ENCODE measurements at regions of chr1 and their contacts with region 1.

Region 1: GRCh38 chr1:160046494-160047110 is 14.8 kb upstream of the PIGM start:
- DNase-seq: peak in 7 of 9 experiments; percentile 11 to 66 (median 36)
- ATAC-seq: peak; percentile 80
- H3K4me3 ChIP-seq: peak overlapping the region in 1 of 2 experiments; percentile 24
- H3K4me3 Mint-ChIP-seq: peak overlapping the region; percentile 76
- H3K27ac ChIP-seq: no peak overlapping the region
- H3K27ac Mint-ChIP-seq: no peak overlapping the region
- H3K4me1 ChIP-seq: peaks cover 6% of the 10 kb centered on the region
- H3K4me1 Mint-ChIP-seq: peaks cover 12% of the 10 kb centered on the region
- H3K27me3 ChIP-seq: peaks cover 0 to 2% of the 10 kb centered on the region in 2 experiments
- H3K27me3 Mint-ChIP-seq: peaks cover 17% of the 10 kb centered on the region
- CTCF ChIP-seq: peak; percentile 46

Region 2: DNA sequence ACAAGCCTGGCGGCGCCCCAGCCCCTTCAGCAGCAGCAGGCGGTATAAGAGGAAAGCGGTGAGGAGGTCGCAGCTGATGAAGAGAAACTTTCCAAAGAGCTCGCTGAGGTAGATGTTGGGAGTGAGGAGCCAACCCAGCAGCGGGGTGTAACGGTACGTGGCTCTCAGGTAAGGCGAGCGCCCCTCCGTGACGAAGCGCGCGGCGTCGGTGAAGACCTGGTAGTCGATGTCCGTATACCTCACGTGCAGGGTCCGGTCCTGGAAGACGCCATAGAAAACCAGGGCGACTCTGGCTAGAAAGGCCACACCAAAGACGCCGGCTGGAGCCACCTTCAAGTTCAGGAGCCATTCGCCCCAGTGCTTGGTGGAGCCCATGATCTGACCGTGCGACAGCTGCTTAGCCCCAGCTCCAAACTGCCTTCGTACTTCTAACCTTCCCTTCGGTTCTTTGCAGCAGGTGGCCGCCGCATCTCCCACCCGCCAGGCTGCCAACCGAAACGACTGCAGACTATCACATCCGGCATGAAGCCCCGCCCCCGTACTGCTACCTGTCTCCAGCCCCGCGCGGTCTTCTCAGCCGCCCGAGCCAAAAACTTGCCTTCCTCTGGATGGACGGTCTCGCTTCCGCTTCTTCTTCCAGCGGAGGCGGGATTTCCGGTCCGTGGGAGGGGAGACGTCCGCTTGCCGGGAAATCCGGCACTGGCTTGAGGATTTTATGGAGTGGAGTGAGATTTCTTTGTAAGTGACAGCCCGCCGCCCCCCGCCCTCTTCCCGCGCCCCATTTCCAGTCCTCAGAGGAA is 15.0 kb before region 1 on chr1 and contains the start of gene PIGM:
- CTCF ChIA-PET with region 1: interaction called, 13 read pairs
- POLR2A ChIA-PET with region 1: interaction called, 8 read pairs
- intact Hi-C with region 1: no loop called
- DNase-seq: peak; percentile 78 to 96 (median 94)
- ATAC-seq: peak; percentile 98
- H3K4me3 ChIP-seq: peak within 1 kb of the TSS; percentile 68 to 90
- H3K4me3 Mint-ChIP-seq: peak within 1 kb of the TSS; percentile 98
- H3K27ac ChIP-seq: peak within 1 kb of the TSS; percentile 58
- H3K27ac Mint-ChIP-seq: peak within 1 kb of the TSS; percentile 93
- H3K4me1 ChIP-seq: peaks cover 23% of the 10 kb centered on the region
- H3K4me1 Mint-ChIP-seq: peaks cover 40% of the 10 kb centered on the region
- H3K27me3 ChIP-seq: no peaks in the 10 kb centered on the region
- H3K27me3 Mint-ChIP-seq: no peaks in the 10 kb centered on the region
- CTCF ChIP-seq: no peak
- total RNA-seq, gene PIGM: 1.4 to 1.6 TPM

Region 3: DNA sequence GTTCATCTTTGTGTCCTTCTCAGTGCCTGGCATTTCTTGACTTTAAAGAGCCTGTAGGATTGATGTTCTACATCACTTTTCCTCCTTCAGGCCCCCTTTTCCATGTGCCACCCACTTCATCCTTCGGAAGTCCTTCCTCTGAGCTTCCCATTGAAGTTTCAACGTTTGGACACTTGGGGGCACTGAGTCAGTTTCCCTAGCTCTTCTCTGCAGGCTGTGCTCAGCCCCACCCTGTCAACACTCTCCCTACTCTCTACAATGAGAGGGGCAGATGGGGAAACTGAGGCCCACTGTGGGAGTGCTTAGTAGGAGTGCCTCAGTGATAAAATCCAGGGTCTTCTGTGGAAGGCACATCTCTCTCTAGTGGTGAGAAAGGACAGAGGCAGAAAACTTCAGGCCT is 11.5 kb after region 1 on chr1:
- CTCF ChIA-PET with region 1: interaction called, 45 read pairs
- POLR2A ChIA-PET with region 1: no interaction called
- intact Hi-C with region 1: no loop called
- DNase-seq: no peak
- ATAC-seq: no peak
- H3K4me3 ChIP-seq: no peak overlapping the region
- H3K4me3 Mint-ChIP-seq: no peak overlapping the region
- H3K27ac ChIP-seq: no peak overlapping the region
- H3K27ac Mint-ChIP-seq: no peak overlapping the region
- H3K4me1 ChIP-seq: no peaks in the 10 kb centered on the region
- H3K4me1 Mint-ChIP-seq: no peaks in the 10 kb centered on the region
- H3K27me3 ChIP-seq: no peaks in the 10 kb centered on the region
- H3K27me3 Mint-ChIP-seq: peaks cover 31% of the 10 kb centered on the region
- CTCF ChIP-seq: no peak

Region 4: DNA sequence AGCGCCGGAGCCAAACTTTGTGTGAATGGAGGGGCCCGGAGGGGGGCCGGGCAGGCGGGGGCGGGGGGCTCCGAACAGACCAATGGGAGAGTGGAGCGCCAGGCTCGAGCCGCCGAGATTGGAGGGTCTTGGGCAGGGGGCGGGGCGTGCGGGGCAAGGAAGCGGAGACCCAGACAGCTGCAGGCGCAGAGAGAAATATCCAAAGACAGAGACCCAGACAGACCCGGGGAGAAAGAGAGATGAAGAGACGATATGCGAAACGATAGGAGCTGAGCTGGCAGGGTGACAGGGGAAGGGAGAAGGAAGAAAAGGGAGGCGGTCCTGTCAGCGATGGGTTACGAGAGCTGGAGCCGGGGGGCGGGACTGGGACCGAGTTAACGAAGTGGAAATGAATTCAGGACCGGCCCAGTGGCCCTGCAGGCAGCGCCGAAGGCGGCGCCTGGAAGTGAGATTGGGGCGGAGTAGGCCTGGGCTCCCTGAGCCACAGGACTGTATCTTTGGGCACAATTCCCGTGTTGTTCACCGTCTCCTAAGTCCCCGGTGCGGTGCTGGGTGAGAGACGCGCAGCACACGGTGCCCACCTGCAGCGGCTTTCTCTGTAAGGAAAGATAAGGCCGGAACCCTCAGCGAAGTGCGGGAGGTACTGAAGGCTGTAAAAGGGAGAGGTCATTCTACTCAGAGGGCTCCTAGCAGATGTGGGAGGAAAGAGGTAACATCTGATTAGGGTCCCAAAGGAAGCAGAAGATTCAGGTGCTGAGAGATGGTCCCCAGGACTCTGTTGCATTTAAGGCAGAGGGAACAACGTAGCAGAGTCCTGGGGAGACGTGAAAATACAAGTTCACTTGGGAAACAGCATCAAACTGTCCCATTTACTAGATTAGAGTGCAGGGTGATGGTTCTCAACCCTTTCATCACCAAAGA is 23.9 kb after region 1 on chr1:
- CTCF ChIA-PET with region 1: interaction called, 320 read pairs
- POLR2A ChIA-PET with region 1: interaction called, 3 read pairs
- intact Hi-C with region 1: no loop called
- DNase-seq: peak; percentile 57 to 86 (median 83)
- ATAC-seq: peak; percentile 98
- H3K4me3 ChIP-seq: peak overlapping the region; percentile 50 to 53
- H3K4me3 Mint-ChIP-seq: peak overlapping the region; percentile 87
- H3K27ac ChIP-seq: no peak overlapping the region
- H3K27ac Mint-ChIP-seq: no peak overlapping the region
- H3K4me1 ChIP-seq: peaks cover 10% of the 10 kb centered on the region
- H3K4me1 Mint-ChIP-seq: peaks cover 10% of the 10 kb centered on the region
- H3K27me3 ChIP-seq: peaks cover 3 to 4% of the 10 kb centered on the region in 2 experiments
- H3K27me3 Mint-ChIP-seq: peaks cover 23% of the 10 kb centered on the region
- CTCF ChIP-seq: no peak

Region 5: GRCh38 chr1:160078512-160079195 is 32.1 kb after region 1 on chr1:
- CTCF ChIA-PET with region 1: interaction called, 320 read pairs
- POLR2A ChIA-PET with region 1: interaction called, 3 read pairs
- intact Hi-C with region 1: loop called in 1 of 2 experiments (anchors 1 kb)
- DNase-seq: peak in 8 of 9 experiments; percentile 33 to 71 (median 60)
- ATAC-seq: peak; percentile 96
- H3K4me3 ChIP-seq: no peak overlapping the region
- H3K4me3 Mint-ChIP-seq: no peak overlapping the region
- H3K27ac ChIP-seq: no peak overlapping the region
- H3K27ac Mint-ChIP-seq: no peak overlapping the region
- H3K4me1 ChIP-seq: peaks cover 6% of the 10 kb centered on the region
- H3K4me1 Mint-ChIP-seq: peaks cover 4% of the 10 kb centered on the region
- H3K27me3 ChIP-seq: peaks cover 19 to 24% of the 10 kb centered on the region in 2 experiments
- H3K27me3 Mint-ChIP-seq: peaks cover 58% of the 10 kb centered on the region
- CTCF ChIP-seq: peak; percentile 84

Measured in CD8-positive, alpha-beta T cell (primary cell).